ENCODE measurements at regions of chr1 and their contacts with region 1.

Region 1: DNA sequence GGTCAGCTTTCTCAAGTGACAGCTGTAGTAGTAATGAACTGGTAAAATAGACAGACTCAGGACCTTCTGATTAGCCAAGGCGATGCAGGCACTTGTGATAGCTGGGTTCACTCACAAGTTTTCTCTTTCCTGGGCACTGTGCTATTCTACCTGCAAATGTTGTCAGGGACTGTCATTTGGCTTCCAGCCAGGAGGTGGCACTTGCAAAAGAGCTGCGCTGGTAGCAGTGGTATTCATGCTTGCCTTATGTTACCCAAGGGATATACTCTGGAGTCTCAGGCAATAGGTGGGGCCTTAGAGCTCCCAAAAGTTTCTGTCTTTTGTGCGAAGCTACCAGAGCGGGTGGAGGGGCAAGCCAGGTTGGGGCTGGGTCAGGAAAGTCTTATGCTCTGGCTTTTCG is 23.5 kb downstream of the IFI44 start:
- DNase-seq: no peak
- H3K4me3 ChIP-seq: no peak overlapping the region
- H3K27ac ChIP-seq: no peak overlapping the region
- H3K4me1 ChIP-seq: no peaks in the 10 kb centered on the region
- H3K27me3 ChIP-seq: no peaks in the 10 kb centered on the region
- CTCF ChIP-seq: no peak
- POLR2A ChIP-seq: no peak

Region 2: DNA sequence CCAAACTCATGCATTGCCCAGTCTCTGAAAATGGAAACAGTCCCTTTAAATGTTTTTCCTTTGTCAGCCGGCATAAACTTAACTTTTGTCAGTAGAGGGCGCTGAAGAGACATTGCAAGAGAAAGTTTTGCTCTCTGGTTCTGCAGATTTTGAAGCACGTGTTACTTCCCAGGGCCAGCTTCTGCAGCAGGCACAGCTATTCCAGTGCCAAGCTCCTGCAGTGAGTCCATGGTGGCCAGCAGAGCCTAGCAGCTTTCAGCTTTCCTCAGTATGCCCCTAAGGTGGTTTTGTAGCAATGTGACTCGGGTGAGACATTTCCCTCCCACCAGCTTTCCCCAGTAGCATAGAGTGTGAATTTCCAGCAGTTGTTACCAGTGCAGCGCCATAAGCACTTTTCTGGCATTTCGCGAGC is 55.5 kb before region 1 on chr1:
- intact Hi-C with region 1: loop called (anchors 5 kb)
- DNase-seq: no peak
- H3K4me3 ChIP-seq: no peak overlapping the region
- H3K27ac ChIP-seq: no peak overlapping the region
- H3K4me1 ChIP-seq: peaks cover 0 to 35% (median 10%) of the 10 kb centered on the region in 3 donors
- H3K27me3 ChIP-seq: no peaks in the 10 kb centered on the region
- CTCF ChIP-seq: peak; percentile 67 to 92 (median 80)
- POLR2A ChIP-seq: no peak

Region 3: GRCh38 chr1:78869136-78869535 is 196.0 kb after region 1 on chr1:
- intact Hi-C with region 1: no loop called
- DNase-seq: no peak
- H3K4me3 ChIP-seq: no peak overlapping the region
- H3K27ac ChIP-seq: no peak overlapping the region
- H3K4me1 ChIP-seq: no peaks in the 10 kb centered on the region
- H3K27me3 ChIP-seq: no peaks in the 10 kb centered on the region
- CTCF ChIP-seq: no peak
- POLR2A ChIP-seq: no peak